ENCODE measurements at regions of chr7 and their contacts with region 1.

Region 1: GRCh38 chr7:130649004-130649790 is 19.4 kb downstream of the COPG2 start:
- DNase-seq: no peak
- ATAC-seq: no peak
- H3K4me3 ChIP-seq: no peak overlapping the region
- H3K27ac ChIP-seq: no peak overlapping the region
- H3K4me1 ChIP-seq: no peaks in the 10 kb centered on the region
- H3K27me3 ChIP-seq: no peaks in the 10 kb centered on the region
- CTCF ChIP-seq: no peak

Region 2: GRCh38 chr7:130752424-130752823 is 103.2 kb after region 1 on chr7:
- CTCF ChIA-PET with region 1: interaction called, 12 read pairs
- POLR2A ChIA-PET with region 1: no interaction called
- in situ Hi-C with region 1: no loop called
- intact Hi-C with region 1: no loop called
- DNase-seq: no peak
- ATAC-seq: no peak
- H3K4me3 ChIP-seq: no peak overlapping the region
- H3K27ac ChIP-seq: no peak overlapping the region
- H3K4me1 ChIP-seq: no peaks in the 10 kb centered on the region
- H3K27me3 ChIP-seq: peaks cover 14% of the 10 kb centered on the region; the same call in 1 of the 2 replicates
- CTCF ChIP-seq: no peak

Measured in Panc1 (cell line).